Common myeloid progenitor, CD34-positive (primary cell): ENCODE measurements at regions of chr2 and their contacts with region 1.

Region 1: GRCh38 chr2:24084386-24085361 is at the start of gene TP53I3:
- DNase-seq: peak; percentile 84 to 93 (median 91)
- H3K4me3 ChIP-seq: peak within 1 kb of the TSS; percentile 77 to 91 (median 84)
- H3K27ac ChIP-seq: peak within 1 kb of the TSS; percentile 46 to 82
- H3K4me1 ChIP-seq: peaks cover 12 to 28% (median 20%) of the 10 kb centered on the region in 4 experiments
- H3K27me3 ChIP-seq: no peaks in the 10 kb centered on the region

Region 2: GRCh38 chr2:23988371-23988770 is 96.3 kb before region 1 on chr2:
- CTCF ChIA-PET with region 1: interaction called, 15 read pairs
- POLR2A ChIA-PET with region 1: no interaction called
- DNase-seq: peak; percentile 44 to 74 (median 73)
- H3K4me3 ChIP-seq: no peak overlapping the region
- H3K27ac ChIP-seq: no peak overlapping the region
- H3K4me1 ChIP-seq: no peaks in the 10 kb centered on the region
- H3K27me3 ChIP-seq: no peaks in the 10 kb centered on the region

Region 3: DNA sequence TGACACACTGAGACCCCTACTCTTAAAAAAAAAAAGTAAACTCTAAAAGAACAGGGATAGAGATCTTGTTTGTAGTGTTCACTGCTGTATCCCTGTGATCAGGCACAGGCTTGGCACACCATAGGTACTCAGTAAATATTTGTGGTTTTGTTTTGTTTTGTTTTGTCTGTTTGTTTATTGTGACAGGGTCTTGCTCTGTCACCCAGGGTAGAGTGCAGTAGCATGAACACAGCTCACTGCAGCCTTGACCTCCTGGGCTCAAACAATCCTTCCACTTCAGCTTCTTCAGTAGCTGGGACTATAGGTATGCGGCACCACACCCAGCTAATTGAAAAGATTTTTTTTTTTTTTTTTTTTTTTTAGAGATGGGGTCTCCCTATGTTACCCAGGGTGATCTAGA is 31.7 kb before region 1 on chr2:
- CTCF ChIA-PET with region 1: no interaction called
- POLR2A ChIA-PET with region 1: no interaction called
- DNase-seq: no peak
- H3K4me3 ChIP-seq: no peak overlapping the region
- H3K27ac ChIP-seq: no peak overlapping the region
- H3K4me1 ChIP-seq: peaks cover 0 to 18% (median 15%) of the 10 kb centered on the region in 4 experiments
- H3K27me3 ChIP-seq: peaks cover 0 to 37% (median 18%) of the 10 kb centered on the region in 5 experiments

Region 4: DNA sequence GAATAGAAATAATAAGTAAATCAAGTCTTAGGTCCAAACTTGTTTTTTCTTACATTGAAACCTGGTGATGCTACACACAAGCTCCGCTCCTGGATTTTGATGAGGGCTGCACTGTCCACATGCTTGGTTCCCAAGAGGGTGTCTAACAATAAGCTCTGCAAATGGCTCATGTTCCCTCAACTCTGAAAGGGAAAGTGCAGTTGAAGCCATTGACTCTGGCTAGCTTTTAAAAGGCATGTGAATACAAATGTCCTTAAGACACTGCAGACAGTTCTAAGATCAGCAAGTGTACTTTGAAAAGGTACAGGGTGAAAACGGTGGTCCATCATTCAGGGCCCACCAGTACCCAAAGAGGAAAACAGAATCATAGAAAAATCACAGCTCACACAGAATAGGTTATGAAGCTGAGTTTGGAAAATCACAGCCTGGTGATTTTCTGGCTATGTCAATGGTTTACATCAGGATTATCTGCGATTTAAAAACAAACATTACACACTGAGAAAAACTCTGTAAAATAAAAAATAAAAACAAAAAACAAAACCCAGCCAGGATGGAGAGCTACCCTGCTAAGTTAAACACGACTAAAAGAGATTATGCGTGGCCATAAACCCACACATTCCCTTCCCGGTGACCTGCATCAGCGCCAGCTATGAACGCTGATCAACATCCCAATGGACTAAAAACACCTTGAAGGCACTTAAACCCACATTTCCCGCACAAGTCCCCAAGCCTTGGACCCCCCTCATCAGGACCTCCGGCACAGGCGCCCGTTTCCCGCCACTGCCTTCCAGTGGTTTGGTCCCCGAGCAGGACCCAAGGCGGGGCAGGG is 37.9 kb after region 1 on chr2:
- CTCF ChIA-PET with region 1: interaction called, 13 read pairs
- POLR2A ChIA-PET with region 1: no interaction called
- DNase-seq: no peak
- H3K4me3 ChIP-seq: peak overlapping the region; percentile 67 to 86 (median 80)
- H3K27ac ChIP-seq: peak overlapping the region in 1 of 2 experiments; percentile 54
- H3K4me1 ChIP-seq: peaks cover 3 to 24% (median 17%) of the 10 kb centered on the region in 4 experiments
- H3K27me3 ChIP-seq: no peaks in the 10 kb centered on the region

Region 5: GRCh38 chr2:24164125-24164973 is 79.7 kb after region 1 on chr2:
- CTCF ChIA-PET with region 1: interaction called, 25 read pairs
- POLR2A ChIA-PET with region 1: no interaction called
- DNase-seq: peak; percentile 55 to 76 (median 67)
- H3K4me3 ChIP-seq: no peak overlapping the region
- H3K27ac ChIP-seq: no peak overlapping the region
- H3K4me1 ChIP-seq: no peaks in the 10 kb centered on the region
- H3K27me3 ChIP-seq: no peaks in the 10 kb centered on the region